Naive thymus-derived CD4-positive, alpha-beta T cell (primary cell): ENCODE measurements at regions of chr12 and their contacts with region 1.

Region 1: DNA sequence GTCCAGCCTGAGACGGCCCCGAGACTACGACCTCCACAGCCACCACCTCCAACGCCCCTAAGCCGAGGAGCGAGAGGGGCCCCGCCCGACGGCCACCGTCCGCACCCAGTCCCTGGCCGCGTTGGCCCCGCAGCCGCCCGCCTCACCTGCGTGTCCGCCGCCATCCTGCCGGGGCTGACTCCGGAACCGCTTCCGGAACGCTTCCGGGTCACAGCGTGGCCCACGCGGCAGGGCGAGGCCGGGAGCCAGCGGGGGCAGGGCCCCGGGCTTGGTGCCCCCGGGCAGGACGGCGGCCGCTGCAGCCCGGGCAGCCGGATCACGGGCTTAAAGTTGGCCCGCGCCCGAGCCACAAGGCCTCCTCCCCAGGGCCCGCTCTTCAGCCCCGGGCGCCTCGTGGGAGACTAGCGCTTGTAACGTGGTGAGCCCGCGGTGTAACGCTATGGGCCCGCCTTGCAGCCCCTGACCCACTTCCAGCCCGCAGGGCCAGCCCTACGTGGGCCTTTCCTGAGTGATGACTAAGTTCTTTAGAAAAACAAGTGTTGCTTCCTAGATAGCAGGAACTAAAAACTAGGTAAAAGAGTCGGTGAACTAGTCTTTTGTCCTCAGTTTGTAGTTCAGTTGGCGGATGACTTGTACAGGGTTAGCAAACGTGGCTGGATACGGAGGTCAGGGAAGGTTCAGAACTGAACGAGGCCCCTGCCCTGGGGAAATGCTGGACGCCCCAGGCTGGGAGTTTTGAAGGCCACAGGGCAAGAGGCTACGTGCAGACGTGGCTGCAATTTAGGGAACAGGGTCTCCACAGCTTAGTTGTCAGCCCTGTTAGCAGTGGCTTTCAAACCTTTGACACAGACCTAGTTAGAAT is at the start of gene GCN1:
- DNase-seq: peak; percentile 77 to 97 (median 89)
- ATAC-seq: peak; percentile 93
- H3K4me3 ChIP-seq: peak within 1 kb of the TSS; percentile 96
- H3K4me3 Mint-ChIP-seq: peak within 1 kb of the TSS; percentile 82 to 96 (median 90)
- H3K27ac ChIP-seq: peak within 1 kb of the TSS; percentile 88
- H3K27ac Mint-ChIP-seq: peak within 1 kb of the TSS; percentile 87 to 95 (median 93)
- H3K4me1 ChIP-seq: peaks cover 20 to 26% of the 10 kb centered on the region in 2 donors
- H3K4me1 Mint-ChIP-seq: peaks cover 27 to 60% (median 44%) of the 10 kb centered on the region in 7 donors
- H3K27me3 ChIP-seq: no peaks in the 10 kb centered on the region
- H3K27me3 Mint-ChIP-seq: no peaks in the 10 kb centered on the region
- total RNA-seq, gene GCN1: 90.6 to 142 (median 132) TPM

Region 2: GRCh38 chr12:119681961-119682638 is 512.7 kb before region 1 on chr12:
- CTCF ChIA-PET with region 1: no interaction called
- POLR2A ChIA-PET with region 1: no interaction called
- intact Hi-C with region 1: loop called in 1 of 2 experiments (anchors 5 kb)
- DNase-seq: no peak
- ATAC-seq: no peak
- H3K4me3 ChIP-seq: no peak overlapping the region
- H3K4me3 Mint-ChIP-seq: peak overlapping the region in 1 of 10 donors; percentile 56
- H3K27ac ChIP-seq: no peak overlapping the region
- H3K27ac Mint-ChIP-seq: peak overlapping the region in 8 of 9 donors; percentile 49 to 89 (median 80)
- H3K4me1 ChIP-seq: no peaks in the 10 kb centered on the region
- H3K4me1 Mint-ChIP-seq: peaks cover 0 to 21% (median 6%) of the 10 kb centered on the region in 7 donors
- H3K27me3 ChIP-seq: no peaks in the 10 kb centered on the region
- H3K27me3 Mint-ChIP-seq: no peaks in the 10 kb centered on the region

Region 3: GRCh38 chr12:120150919-120151525 is 43.7 kb before region 1 on chr12:
- CTCF ChIA-PET with region 1: no interaction called
- POLR2A ChIA-PET with region 1: no interaction called
- intact Hi-C with region 1: no loop called
- DNase-seq: no peak
- ATAC-seq: no peak
- H3K4me3 ChIP-seq: no peak overlapping the region
- H3K4me3 Mint-ChIP-seq: no peak overlapping the region
- H3K27ac ChIP-seq: no peak overlapping the region
- H3K27ac Mint-ChIP-seq: no peak overlapping the region
- H3K4me1 ChIP-seq: no peaks in the 10 kb centered on the region
- H3K4me1 Mint-ChIP-seq: no peaks in the 10 kb centered on the region
- H3K27me3 ChIP-seq: no peaks in the 10 kb centered on the region
- H3K27me3 Mint-ChIP-seq: no peaks in the 10 kb centered on the region

Region 4: DNA sequence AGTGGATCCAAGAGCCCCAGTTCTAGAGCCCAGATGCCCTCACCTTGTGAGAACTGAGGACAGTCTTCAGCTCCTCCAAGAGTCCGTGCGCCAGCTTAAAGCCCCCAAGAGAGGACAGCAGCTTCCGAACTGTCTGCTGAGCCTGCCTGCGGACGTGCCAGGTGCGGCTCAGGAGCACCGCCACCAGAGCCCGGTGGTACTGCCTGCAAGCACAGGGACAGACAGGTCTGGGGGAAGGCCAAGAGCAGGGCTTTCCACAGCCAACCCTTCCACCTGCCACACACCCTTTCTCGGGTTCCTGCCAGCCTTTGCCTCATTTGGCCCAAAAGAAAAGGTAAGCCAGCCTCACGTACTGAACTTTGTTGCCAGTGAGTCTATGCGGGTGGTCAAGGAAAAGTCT is 30.5 kb before region 1 on chr12:
- CTCF ChIA-PET with region 1: interaction called, 10 read pairs
- POLR2A ChIA-PET with region 1: no interaction called
- intact Hi-C with region 1: no loop called
- DNase-seq: no peak
- ATAC-seq: no peak
- H3K4me3 ChIP-seq: no peak overlapping the region
- H3K4me3 Mint-ChIP-seq: no peak overlapping the region
- H3K27ac ChIP-seq: no peak overlapping the region
- H3K27ac Mint-ChIP-seq: no peak overlapping the region
- H3K4me1 ChIP-seq: no peaks in the 10 kb centered on the region
- H3K4me1 Mint-ChIP-seq: peaks cover 0 to 10% (median 0%) of the 10 kb centered on the region in 7 donors
- H3K27me3 ChIP-seq: no peaks in the 10 kb centered on the region
- H3K27me3 Mint-ChIP-seq: no peaks in the 10 kb centered on the region

Region 5: DNA sequence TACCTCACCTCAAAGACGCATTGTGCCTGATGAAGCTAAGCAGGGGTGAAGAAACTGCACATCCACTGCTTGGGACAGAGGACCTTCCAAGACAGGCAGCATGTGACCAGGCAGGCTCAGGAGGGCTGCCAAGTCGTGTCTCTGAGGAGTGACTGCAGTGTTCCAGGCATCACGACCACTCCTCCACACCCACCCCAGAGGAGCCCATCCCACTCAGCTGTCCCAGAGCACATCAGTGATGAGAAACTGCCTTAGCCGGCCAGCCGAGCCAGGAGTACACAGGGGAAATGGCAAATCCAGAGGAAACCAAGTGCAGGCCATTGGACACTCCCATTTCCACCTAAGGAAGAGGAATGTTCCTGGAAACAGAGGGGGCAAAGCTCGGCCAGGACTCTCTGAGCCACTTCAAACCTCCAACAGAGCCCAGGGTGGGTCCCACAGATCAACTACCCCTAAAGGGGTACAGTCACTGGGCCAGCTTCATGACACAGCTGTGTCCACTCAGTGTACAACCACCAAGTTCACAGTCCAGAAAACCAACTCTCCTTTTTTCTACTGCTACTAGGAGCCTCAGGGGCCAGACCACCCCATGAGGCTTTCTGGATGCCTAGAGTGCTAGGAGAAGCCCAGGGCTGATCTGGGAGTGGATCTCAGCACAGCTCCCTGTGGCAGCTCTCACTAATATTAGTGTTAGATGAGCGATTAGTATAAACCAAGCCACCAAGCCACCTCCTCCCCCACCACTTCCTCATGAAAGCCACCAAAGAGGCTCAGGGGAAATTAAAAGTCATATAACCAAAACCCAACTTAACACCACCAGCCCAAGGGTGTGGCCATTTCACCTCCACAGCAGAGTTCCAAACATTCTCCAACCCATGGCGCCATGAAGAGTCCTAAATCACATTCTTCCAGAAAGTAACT is 55.4 kb after region 1 on chr12:
- CTCF ChIA-PET with region 1: no interaction called
- POLR2A ChIA-PET with region 1: interaction called, 62 read pairs
- intact Hi-C with region 1: no loop called
- DNase-seq: peak in 1 of 9 donors; percentile 37
- ATAC-seq: no peak
- H3K4me3 ChIP-seq: peak overlapping the region; percentile 46
- H3K4me3 Mint-ChIP-seq: peak overlapping the region; percentile 74 to 86 (median 84)
- H3K27ac ChIP-seq: peak overlapping the region; percentile 55
- H3K27ac Mint-ChIP-seq: peak overlapping the region; percentile 88 to 99 (median 96)
- H3K4me1 ChIP-seq: peaks cover 71 to 82% of the 10 kb centered on the region in 2 donors
- H3K4me1 Mint-ChIP-seq: peaks cover 68 to 92% (median 81%) of the 10 kb centered on the region in 7 donors
- H3K27me3 ChIP-seq: no peaks in the 10 kb centered on the region
- H3K27me3 Mint-ChIP-seq: no peaks in the 10 kb centered on the region

Region 6: GRCh38 chr12:120301962-120302815 is 107.4 kb after region 1 on chr12 and contains the start of gene SIRT4:
- CTCF ChIA-PET with region 1: no interaction called
- POLR2A ChIA-PET with region 1: interaction called, 18 read pairs
- intact Hi-C with region 1: no loop called
- DNase-seq: peak; percentile 65 to 90 (median 87)
- ATAC-seq: peak; percentile 100
- H3K4me3 ChIP-seq: peak within 1 kb of the TSS; percentile 98
- H3K4me3 Mint-ChIP-seq: peak within 1 kb of the TSS; percentile 87 to 100 (median 96)
- H3K27ac ChIP-seq: peak within 1 kb of the TSS; percentile 72
- H3K27ac Mint-ChIP-seq: peak within 1 kb of the TSS; percentile 69 to 96 (median 87)
- H3K4me1 ChIP-seq: peaks cover 0 to 4% of the 10 kb centered on the region in 2 donors
- H3K4me1 Mint-ChIP-seq: peaks cover 0 to 16% (median 10%) of the 10 kb centered on the region in 7 donors
- H3K27me3 ChIP-seq: no peaks in the 10 kb centered on the region
- H3K27me3 Mint-ChIP-seq: no peaks in the 10 kb centered on the region
- total RNA-seq, gene SIRT4: 1.6 to 6.0 (median 4.0) TPM